Caco-2 (cell line): ENCODE measurements at regions of chr4 and their contacts with region 1.

Region 1: DNA sequence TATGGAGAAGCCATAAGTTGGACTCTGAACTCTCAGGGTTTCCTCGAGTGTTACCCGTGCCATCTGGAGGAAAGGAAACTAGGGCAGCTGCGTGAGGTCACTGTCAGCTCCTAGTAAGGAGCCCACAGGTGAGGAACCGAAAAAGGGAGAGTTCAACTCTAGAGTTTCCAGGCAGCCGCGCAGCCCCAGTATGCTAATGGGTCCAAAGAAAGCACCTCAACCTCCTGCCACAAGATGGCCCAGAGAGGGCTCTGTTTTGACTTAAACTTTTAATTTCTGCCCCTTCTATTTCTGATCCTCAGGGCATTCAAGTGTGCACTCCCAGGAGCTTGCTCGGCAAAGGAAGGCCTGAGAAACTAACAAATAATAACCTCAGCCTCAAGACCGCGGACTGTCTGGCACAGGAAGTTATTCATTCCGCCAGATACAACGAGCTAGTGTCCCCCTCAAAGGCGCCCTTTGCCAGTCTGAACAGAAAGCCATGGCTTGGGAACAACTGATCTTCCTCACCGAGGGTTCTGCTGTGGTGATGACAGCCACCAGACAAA is 13.9 kb downstream of the SCARB2 start:
- DNase-seq: no peak
- H3K4me3 ChIP-seq: no peak overlapping the region
- H3K4me3 Mint-ChIP-seq: no peak overlapping the region
- H3K27ac Mint-ChIP-seq: no peak overlapping the region
- H3K4me1 ChIP-seq: peaks cover 31% of the 10 kb centered on the region
- H3K4me1 Mint-ChIP-seq: peaks cover 15% of the 10 kb centered on the region
- H3K27me3 ChIP-seq: no peaks in the 10 kb centered on the region
- H3K27me3 Mint-ChIP-seq: no peaks in the 10 kb centered on the region
- CTCF ChIP-seq: no peak

Region 2: GRCh38 chr4:76213415-76214176 is 13.9 kb after region 1 on chr4 and contains the start of gene SCARB2:
- CTCF ChIA-PET with region 1: no interaction called
- POLR2A ChIA-PET with region 1: no interaction called
- intact Hi-C with region 1: loop called (anchors 1 kb)
- DNase-seq: peak; percentile 81 to 91
- H3K4me3 ChIP-seq: peak within 1 kb of the TSS; percentile 84
- H3K4me3 Mint-ChIP-seq: peak within 1 kb of the TSS; percentile 84
- H3K27ac Mint-ChIP-seq: peak within 1 kb of the TSS; percentile 83
- H3K4me1 ChIP-seq: peaks cover 52% of the 10 kb centered on the region
- H3K4me1 Mint-ChIP-seq: peaks cover 56% of the 10 kb centered on the region
- H3K27me3 ChIP-seq: no peaks in the 10 kb centered on the region
- H3K27me3 Mint-ChIP-seq: no peaks in the 10 kb centered on the region
- CTCF ChIP-seq: peak in 1 of 2 experiments; percentile 13
- total RNA-seq, gene SCARB2: 148 and 150 TPM in 2 replicates

Region 3: DNA sequence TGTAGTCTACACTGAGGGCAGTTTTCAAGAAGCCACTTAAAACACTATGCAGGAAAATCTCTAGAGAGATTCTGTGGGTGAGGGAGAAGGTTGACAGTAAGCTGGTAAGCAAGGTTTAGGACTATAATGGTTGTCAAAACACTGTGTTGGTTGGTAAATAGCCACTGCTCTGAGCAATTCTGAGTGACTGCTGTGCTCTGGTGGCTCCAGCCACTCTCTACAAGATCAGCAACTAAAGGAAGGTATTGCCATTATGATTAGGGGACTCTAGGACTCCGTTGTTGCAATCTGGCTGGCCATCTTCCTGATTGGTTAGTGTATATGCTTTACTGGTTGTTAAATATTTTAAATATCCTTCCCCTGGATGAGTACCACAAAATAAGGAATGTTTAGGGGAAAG is 46.3 kb after region 1 on chr4:
- CTCF ChIA-PET with region 1: no interaction called
- POLR2A ChIA-PET with region 1: no interaction called
- intact Hi-C with region 1: loop called (anchors 1 kb)
- DNase-seq: peak in 1 of 2 experiments; percentile 25
- H3K4me3 ChIP-seq: no peak overlapping the region
- H3K4me3 Mint-ChIP-seq: no peak overlapping the region
- H3K27ac Mint-ChIP-seq: no peak overlapping the region
- H3K4me1 ChIP-seq: peaks cover 8% of the 10 kb centered on the region
- H3K4me1 Mint-ChIP-seq: peaks cover 8% of the 10 kb centered on the region
- H3K27me3 ChIP-seq: no peaks in the 10 kb centered on the region
- H3K27me3 Mint-ChIP-seq: no peaks in the 10 kb centered on the region
- CTCF ChIP-seq: peak in 1 of 2 experiments; percentile 36

Region 4: DNA sequence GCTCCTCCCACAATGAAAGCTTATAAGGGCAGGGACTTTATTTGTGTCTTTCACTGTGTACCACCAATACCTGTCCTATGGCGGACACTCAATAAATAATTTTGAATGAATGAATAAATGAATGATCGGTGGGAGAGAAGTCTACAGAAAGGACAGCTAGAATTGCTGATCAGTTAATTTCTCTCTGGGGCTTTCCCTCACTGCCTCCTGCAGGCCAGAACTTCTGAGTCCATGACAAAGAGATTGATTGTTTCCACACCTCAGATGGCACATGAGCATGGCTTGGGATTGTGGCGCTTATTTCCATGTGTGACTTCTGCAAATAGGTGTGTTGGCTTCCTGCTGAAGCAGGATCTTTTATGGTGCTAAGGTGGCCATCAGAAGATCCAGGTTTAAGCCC is 58.1 kb after region 1 on chr4:
- CTCF ChIA-PET with region 1: no interaction called
- POLR2A ChIA-PET with region 1: no interaction called
- intact Hi-C with region 1: no loop called
- DNase-seq: no peak
- H3K4me3 ChIP-seq: no peak overlapping the region
- H3K4me3 Mint-ChIP-seq: no peak overlapping the region
- H3K27ac Mint-ChIP-seq: no peak overlapping the region
- H3K4me1 ChIP-seq: 0 out of 2 replicates have a peak, but pooled peaks cover 17% of the 10 kb centered on the region
- H3K4me1 Mint-ChIP-seq: peaks cover 7% of the 10 kb centered on the region
- H3K27me3 ChIP-seq: no peaks in the 10 kb centered on the region
- H3K27me3 Mint-ChIP-seq: no peaks in the 10 kb centered on the region
- CTCF ChIP-seq: no peak